ENCODE measurements at regions of chr2 and their contacts with region 1.

Region 1: GRCh38 chr2:60550178-60550983 is 3.1 kb downstream of the BCL11A start:
- DNase-seq: peak; percentile 52 to 81
- ATAC-seq: peak; percentile 59 to 84 (median 80)
- H3K4me3 ChIP-seq: peak overlapping the region; percentile 42 to 80 (median 68)
- H3K27ac ChIP-seq: peak overlapping the region in 9 of 10 donors; percentile 56 to 85 (median 77)
- H3K4me1 ChIP-seq: peaks cover 0 to 79% (median 41%) of the 10 kb centered on the region in 9 donors
- H3K27me3 ChIP-seq: peaks cover 0 to 100% (median 92%) of the 10 kb centered on the region in 7 donors
- CTCF ChIP-seq: peak in 8 of 9 donors; percentile 22 to 66 (median 57)

Region 2: GRCh38 chr2:60337140-60337494 is 213.3 kb before region 1 on chr2:
- intact Hi-C with region 1: loop called in 9 of 10 experiments (anchors 2 to 10 kb)
- DNase-seq: peak in 1 of 2 donors; percentile 47
- ATAC-seq: peak in 7 of 8 donors; percentile 47 to 75 (median 69)
- H3K4me3 ChIP-seq: no peak overlapping the region
- H3K27ac ChIP-seq: no peak overlapping the region
- H3K4me1 ChIP-seq: peaks cover 0 to 20% (median 0%) of the 10 kb centered on the region in 9 donors
- H3K27me3 ChIP-seq: no peaks in the 10 kb centered on the region
- CTCF ChIP-seq: peak in 7 of 9 donors; percentile 14 to 49 (median 36)

Region 3: DNA sequence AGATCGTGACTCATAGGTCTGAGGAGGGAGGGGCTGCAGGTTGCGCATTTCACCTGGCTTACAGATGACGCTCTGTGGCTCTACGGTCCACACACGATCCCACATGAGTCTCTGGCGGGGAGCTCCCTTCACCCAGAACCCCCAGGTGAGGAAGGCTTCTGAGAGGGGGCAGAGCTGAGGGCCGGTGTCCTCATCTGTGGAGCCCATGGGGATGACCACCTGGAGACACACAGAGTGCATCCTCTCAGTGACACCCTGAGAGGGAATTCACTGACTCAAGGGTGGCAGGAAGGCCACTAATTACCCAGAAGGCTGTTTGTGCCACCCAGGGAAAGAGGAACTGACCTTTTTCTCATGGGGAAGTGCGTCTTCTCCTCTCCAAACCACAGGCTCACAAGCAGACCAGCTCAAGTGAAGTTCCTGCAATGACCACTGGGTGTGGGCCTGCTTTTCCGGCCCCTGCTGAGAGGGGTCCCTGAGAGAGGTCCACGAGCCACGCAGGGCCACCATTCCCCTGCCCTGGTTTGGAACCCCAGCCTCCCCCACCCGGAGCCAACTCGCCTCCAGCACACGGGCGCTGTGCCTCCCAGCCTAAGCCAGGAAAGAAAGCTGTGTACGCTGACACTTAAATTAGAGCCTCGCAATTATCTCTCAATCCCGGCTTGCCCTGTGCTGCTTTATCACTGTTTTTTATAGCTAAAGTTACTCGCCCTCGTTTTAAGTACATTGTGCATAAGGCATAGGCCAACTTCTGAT is 111.0 kb before region 1 on chr2:
- intact Hi-C with region 1: loop called in 3 of 10 experiments (anchors 2 to 10 kb)
- DNase-seq: peak; percentile 47 to 51
- ATAC-seq: peak; percentile 71 to 89 (median 80)
- H3K4me3 ChIP-seq: peak overlapping the region in 9 of 10 donors; percentile 25 to 47 (median 39)
- H3K27ac ChIP-seq: peak overlapping the region; percentile 38 to 85 (median 74)
- H3K4me1 ChIP-seq: peaks cover 0 to 43% (median 7%) of the 10 kb centered on the region in 9 donors
- H3K27me3 ChIP-seq: peaks cover 0 to 3% (median 0%) of the 10 kb centered on the region in 7 donors
- CTCF ChIP-seq: peak in 8 of 9 donors; percentile 28 to 61 (median 50)

Region 4: GRCh38 chr2:60484133-60484645 is 66.2 kb before region 1 on chr2:
- intact Hi-C with region 1: loop called in 2 of 10 experiments (anchors 5 to 10 kb)
- DNase-seq: peak in 1 of 2 donors; percentile 31
- ATAC-seq: peak; percentile 21 to 71 (median 46)
- H3K4me3 ChIP-seq: no peak overlapping the region
- H3K27ac ChIP-seq: peak overlapping the region; percentile 28 to 88 (median 76)
- H3K4me1 ChIP-seq: peaks cover 12 to 73% (median 42%) of the 10 kb centered on the region in 9 donors
- H3K27me3 ChIP-seq: no peaks in the 10 kb centered on the region
- CTCF ChIP-seq: no peak

Region 5: DNA sequence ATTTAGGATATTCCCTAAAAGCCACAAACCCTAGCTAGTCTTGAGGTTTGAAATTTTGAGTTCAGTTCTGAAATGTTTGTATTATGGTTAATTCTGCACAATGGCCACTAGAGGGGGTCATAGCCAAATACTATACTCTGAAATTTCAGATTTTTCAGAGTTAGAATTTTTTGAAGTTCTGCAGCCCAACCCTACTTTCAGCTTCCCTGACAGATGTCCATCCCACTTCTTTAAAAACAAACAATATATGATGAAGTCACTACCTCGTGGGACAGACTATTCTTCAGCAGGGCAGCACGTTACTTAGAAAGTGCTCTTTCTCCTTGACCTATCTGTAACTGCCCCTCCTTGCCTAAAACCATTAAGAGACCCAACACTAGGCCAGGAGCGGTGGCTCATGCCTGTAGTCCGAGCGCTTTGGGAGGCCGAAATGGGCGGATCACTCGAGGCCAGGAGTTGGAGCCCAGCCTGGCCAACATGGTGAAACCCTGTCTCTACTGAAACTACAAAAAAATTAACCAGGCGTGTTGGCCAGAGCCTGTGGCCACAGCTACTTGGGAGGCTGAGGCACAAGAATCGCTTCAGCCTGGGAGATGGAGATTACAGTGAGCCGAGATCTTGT is 157.5 kb after region 1 on chr2:
- intact Hi-C with region 1: no loop called
- DNase-seq: no peak
- ATAC-seq: peak in 5 of 8 donors; percentile 25 to 66 (median 40)
- H3K4me3 ChIP-seq: no peak overlapping the region
- H3K27ac ChIP-seq: no peak overlapping the region
- H3K4me1 ChIP-seq: peaks cover 0 to 16% (median 0%) of the 10 kb centered on the region in 9 donors
- H3K27me3 ChIP-seq: peaks cover 0 to 2% (median 0%) of the 10 kb centered on the region in 7 donors
- CTCF ChIP-seq: peak; percentile 65 to 82 (median 73)

Measured in heart right ventricle (tissue), 16 donors.